CD4-positive, alpha-beta memory T cell (primary cell): ENCODE measurements at regions of chr19 and their contacts with region 1.

Region 1: GRCh38 chr19:3163230-3163886 is 15.2 kb upstream of the S1PR4 start:
- DNase-seq: peak; percentile 69 to 73 (median 71)
- H3K4me3 ChIP-seq: no peak overlapping the region
- H3K4me3 Mint-ChIP-seq: peak overlapping the region in 3 of 8 donors; percentile 5 to 55 (median 55)
- H3K27ac ChIP-seq: no peak overlapping the region
- H3K27ac Mint-ChIP-seq: peak overlapping the region; percentile 62 to 92 (median 77)
- H3K4me1 ChIP-seq: peaks cover 11% of the 10 kb centered on the region
- H3K4me1 Mint-ChIP-seq: peaks cover 9 to 30% (median 15%) of the 10 kb centered on the region in 4 donors
- H3K27me3 ChIP-seq: no peaks in the 10 kb centered on the region
- H3K27me3 Mint-ChIP-seq: no peaks in the 10 kb centered on the region

Region 2: DNA sequence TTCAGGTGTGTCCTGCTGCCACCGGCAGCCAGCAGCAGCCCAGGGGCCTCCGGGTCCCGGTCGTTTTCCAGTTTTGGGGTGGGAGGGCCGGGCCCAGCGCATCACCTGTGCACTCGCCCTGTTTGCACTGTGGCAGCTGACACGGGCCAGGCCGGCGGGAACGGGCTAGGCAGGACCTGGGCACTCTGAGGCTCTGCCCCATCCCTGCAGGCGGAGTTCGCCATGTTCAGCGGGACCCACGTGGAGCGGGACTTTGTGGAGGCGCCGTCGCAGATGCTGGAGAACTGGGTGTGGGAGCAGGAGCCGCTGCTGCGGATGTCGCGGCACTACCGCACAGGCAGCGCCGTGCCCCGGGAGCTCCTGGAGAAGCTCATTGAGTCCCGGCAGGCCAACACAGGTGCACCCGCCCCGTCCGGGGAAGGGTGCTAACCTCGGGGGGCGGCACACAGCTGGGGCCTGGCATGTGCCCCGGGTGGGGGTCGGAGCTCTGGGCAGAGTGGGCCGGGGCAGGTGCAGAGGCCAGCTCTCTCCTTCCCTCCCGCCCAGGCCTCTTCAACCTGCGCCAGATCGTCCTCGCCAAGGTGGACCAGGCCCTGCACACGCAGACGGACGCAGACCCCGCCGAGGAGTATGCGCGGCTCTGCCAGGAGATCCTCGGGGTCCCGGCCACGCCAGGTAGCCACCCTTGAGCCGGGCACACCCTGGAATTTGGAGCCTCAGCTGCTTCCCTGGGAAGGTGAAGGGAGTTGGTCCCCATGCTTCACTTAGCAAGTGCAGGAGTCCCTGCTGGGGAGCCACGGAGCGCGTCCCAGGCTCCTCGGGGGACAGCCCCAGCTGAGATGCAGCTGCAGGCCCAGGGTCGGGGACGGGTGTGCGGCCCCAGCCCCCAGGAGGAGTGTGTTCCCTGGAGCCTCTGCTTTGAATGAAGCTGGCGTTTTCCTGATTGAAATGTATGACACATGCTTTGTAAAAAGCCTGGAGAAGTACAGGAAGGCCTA is 353.0 kb before region 1 on chr19:
- CTCF ChIA-PET with region 1: no interaction called
- POLR2A ChIA-PET with region 1: no interaction called
- intact Hi-C with region 1: no loop called
- DNase-seq: no peak
- H3K4me3 ChIP-seq: no peak overlapping the region
- H3K4me3 Mint-ChIP-seq: no peak overlapping the region
- H3K27ac ChIP-seq: no peak overlapping the region
- H3K27ac Mint-ChIP-seq: no peak overlapping the region
- H3K4me1 ChIP-seq: no peaks in the 10 kb centered on the region
- H3K4me1 Mint-ChIP-seq: no peaks in the 10 kb centered on the region
- H3K27me3 ChIP-seq: no peaks in the 10 kb centered on the region
- H3K27me3 Mint-ChIP-seq: no peaks in the 10 kb centered on the region

Region 3: GRCh38 chr19:2962045-2962561 is 201.3 kb before region 1 on chr19:
- CTCF ChIA-PET with region 1: interaction called, 4 read pairs
- POLR2A ChIA-PET with region 1: no interaction called
- intact Hi-C with region 1: loop called (anchors 1 kb)
- DNase-seq: peak; percentile 72 to 80 (median 77)
- H3K4me3 ChIP-seq: no peak overlapping the region
- H3K4me3 Mint-ChIP-seq: peak overlapping the region in 2 of 8 donors; percentile 16 to 17
- H3K27ac ChIP-seq: no peak overlapping the region
- H3K27ac Mint-ChIP-seq: peak overlapping the region; percentile 48 to 92 (median 85)
- H3K4me1 ChIP-seq: no peaks in the 10 kb centered on the region
- H3K4me1 Mint-ChIP-seq: peaks cover 4 to 6% (median 5%) of the 10 kb centered on the region in 4 donors
- H3K27me3 ChIP-seq: no peaks in the 10 kb centered on the region
- H3K27me3 Mint-ChIP-seq: no peaks in the 10 kb centered on the region

Region 4: DNA sequence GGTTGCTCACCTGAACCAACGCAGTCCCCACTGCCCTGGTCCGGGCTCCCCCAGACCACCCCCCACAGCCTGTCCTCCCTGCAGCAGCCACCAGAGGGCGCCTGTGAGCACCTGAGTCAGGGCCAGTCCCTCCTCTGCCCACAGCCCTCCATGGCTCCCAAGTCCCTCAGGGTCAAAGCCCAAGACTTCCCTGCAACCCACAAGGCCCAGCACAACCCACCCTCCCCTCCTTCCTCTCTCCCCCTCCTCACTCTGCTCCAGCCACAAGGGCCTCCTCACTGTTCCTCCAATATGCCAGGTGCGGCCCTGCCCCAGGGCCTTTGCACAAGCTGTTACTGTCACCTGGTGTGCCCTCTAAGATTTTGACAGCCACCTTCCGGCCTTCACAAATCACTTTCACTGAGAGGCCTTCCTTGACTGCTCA is 16.7 kb before region 1 on chr19:
- CTCF ChIA-PET with region 1: interaction called, 25 read pairs
- POLR2A ChIA-PET with region 1: interaction called, 3 read pairs
- intact Hi-C with region 1: loop called (anchors 1 kb)
- DNase-seq: peak; percentile 45 to 66 (median 49)
- H3K4me3 ChIP-seq: no peak overlapping the region
- H3K4me3 Mint-ChIP-seq: peak overlapping the region in 2 of 8 donors; percentile 20 to 52
- H3K27ac ChIP-seq: no peak overlapping the region
- H3K27ac Mint-ChIP-seq: peak overlapping the region; percentile 62 to 83 (median 73)
- H3K4me1 ChIP-seq: peaks cover 13% of the 10 kb centered on the region
- H3K4me1 Mint-ChIP-seq: peaks cover 10 to 32% (median 18%) of the 10 kb centered on the region in 4 donors
- H3K27me3 ChIP-seq: no peaks in the 10 kb centered on the region
- H3K27me3 Mint-ChIP-seq: no peaks in the 10 kb centered on the region

Region 5: DNA sequence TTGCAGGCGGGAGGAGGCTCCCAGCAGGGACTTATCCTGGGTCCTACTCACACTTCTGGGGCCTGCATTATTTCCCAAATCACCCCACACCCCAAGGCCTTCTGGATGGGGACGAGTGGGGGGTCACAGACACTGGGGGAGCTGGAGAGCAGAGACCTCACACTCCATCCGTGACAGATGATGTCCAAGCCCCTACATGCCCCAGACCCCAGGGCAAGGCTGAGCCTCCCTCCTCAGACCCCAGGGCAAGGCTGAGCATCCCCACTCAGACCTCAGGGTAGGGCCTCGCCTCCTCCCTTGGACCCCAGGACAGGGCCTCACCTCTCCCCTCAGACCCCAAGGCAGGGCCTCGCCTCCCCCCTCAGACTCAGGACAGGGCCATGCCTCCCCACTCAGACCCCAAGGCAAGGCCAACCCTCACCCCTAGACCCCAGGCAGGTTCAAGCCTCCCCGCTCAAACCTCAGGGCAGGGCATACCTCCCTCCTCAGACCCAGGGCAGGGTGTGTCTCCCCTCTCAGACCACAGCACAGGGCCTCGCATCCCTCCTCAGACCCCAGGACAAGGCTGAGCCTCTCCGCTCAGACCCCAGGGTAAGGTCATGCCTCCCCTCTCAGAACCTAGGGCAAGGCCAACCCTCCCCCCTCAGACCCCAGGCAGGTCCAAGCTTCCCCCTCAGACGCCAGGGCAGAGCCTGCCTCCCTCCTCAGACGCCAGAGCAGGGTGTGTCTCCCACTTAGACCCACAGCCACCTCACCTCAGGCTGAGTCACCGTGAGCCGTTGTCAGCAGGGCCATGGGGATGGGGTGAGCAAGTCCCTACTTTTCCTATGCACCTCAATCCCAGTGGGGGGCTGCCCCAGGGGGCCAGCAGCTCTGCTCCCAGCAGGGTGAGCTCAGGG is 13.5 kb after region 1 on chr19:
- CTCF ChIA-PET with region 1: interaction called, 8 read pairs
- POLR2A ChIA-PET with region 1: interaction called, 6 read pairs
- intact Hi-C with region 1: loop called (anchors 2 kb)
- DNase-seq: peak; percentile 56 to 89 (median 64)
- H3K4me3 ChIP-seq: peak overlapping the region; percentile 67 to 68
- H3K4me3 Mint-ChIP-seq: peak overlapping the region; percentile 80 to 90 (median 84)
- H3K27ac ChIP-seq: peak overlapping the region; percentile 80
- H3K27ac Mint-ChIP-seq: peak overlapping the region; percentile 92 to 98 (median 96)
- H3K4me1 ChIP-seq: peaks cover 26% of the 10 kb centered on the region
- H3K4me1 Mint-ChIP-seq: peaks cover 12 to 41% (median 23%) of the 10 kb centered on the region in 4 donors
- H3K27me3 ChIP-seq: no peaks in the 10 kb centered on the region
- H3K27me3 Mint-ChIP-seq: no peaks in the 10 kb centered on the region

Region 6: GRCh38 chr19:3195948-3196695 is 32.8 kb after region 1 on chr19:
- CTCF ChIA-PET with region 1: no interaction called
- POLR2A ChIA-PET with region 1: no interaction called
- intact Hi-C with region 1: no loop called
- DNase-seq: no peak
- H3K4me3 ChIP-seq: no peak overlapping the region
- H3K4me3 Mint-ChIP-seq: no peak overlapping the region
- H3K27ac ChIP-seq: no peak overlapping the region
- H3K27ac Mint-ChIP-seq: no peak overlapping the region
- H3K4me1 ChIP-seq: no peaks in the 10 kb centered on the region
- H3K4me1 Mint-ChIP-seq: peaks cover 0 to 2% (median 0%) of the 10 kb centered on the region in 4 donors
- H3K27me3 ChIP-seq: no peaks in the 10 kb centered on the region
- H3K27me3 Mint-ChIP-seq: no peaks in the 10 kb centered on the region